Activated CD8-positive, alpha-beta T cell treated with anti-CD3 and anti-CD28 coated beads for 36 hours (primary cell): ENCODE measurements at regions of chr14 and their contacts with region 1.

Region 1: DNA sequence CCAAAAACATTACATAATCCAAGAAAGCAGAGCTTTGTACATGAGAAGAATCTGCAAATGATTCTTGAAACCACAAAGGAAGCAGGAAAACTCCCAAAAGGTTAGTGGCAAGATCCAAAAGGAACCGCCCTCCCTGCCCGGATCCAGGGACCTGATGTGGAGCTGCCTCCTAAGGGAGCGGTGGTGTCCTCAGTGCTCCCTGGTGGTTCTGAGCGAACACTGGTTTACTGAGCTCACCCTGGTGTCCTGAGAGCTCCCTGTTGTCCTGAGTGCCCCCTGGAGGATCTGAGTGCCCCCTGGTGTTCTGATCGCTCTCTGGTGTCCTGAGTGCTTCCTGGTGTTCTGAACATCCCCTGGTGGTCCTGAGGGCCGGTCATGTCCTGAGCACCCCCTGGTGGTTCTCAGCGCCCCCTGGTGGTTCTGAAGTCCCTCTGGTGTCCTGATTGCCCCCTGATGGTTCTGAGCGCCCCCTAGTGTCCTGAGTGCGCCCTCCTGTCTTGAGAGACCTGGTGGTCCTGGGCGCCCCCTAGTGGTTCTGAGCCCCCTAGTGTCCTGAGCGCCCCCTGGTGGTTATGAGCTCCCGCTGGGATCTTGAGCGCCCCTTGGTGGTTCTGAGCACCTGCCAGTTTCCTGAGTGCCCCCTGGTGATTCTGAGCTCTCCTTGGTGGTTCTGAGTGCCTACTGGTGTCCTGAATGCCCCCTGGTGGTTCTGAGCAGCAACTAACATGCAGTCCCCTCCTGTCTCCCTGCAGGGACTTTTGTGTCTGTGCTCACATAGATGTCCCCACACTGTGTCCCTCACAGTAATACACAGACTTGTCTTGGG is 891.1 kb downstream of the TMEM121 start:
- DNase-seq: peak; percentile 100
- ATAC-seq: peak; percentile 97
- H3K4me3 Mint-ChIP-seq: no peak overlapping the region
- H3K27ac Mint-ChIP-seq: no peak overlapping the region
- H3K4me1 Mint-ChIP-seq: no peaks in the 10 kb centered on the region
- H3K27me3 Mint-ChIP-seq: peaks cover 2% of the 10 kb centered on the region
- CTCF ChIP-seq: peak; percentile 100

Region 2: GRCh38 chr14:106372870-106373652 is 44.4 kb before region 1 on chr14:
- CTCF ChIA-PET with region 1: interaction called, 136 read pairs
- POLR2A ChIA-PET with region 1: interaction called, 5 read pairs
- intact Hi-C with region 1: no loop called
- DNase-seq: peak; percentile 93
- ATAC-seq: peak; percentile 96
- H3K4me3 Mint-ChIP-seq: peak overlapping the region; percentile 45
- H3K27ac Mint-ChIP-seq: peak overlapping the region; percentile 40
- H3K4me1 Mint-ChIP-seq: peaks cover 24% of the 10 kb centered on the region
- H3K27me3 Mint-ChIP-seq: no peaks in the 10 kb centered on the region
- CTCF ChIP-seq: peak; percentile 87

Region 3: GRCh38 chr14:106459971-106460730 is 42.7 kb after region 1 on chr14:
- CTCF ChIA-PET with region 1: interaction called, 183 read pairs
- POLR2A ChIA-PET with region 1: no interaction called
- intact Hi-C with region 1: no loop called
- DNase-seq: no peak
- ATAC-seq: no peak
- H3K4me3 Mint-ChIP-seq: no peak overlapping the region
- H3K27ac Mint-ChIP-seq: no peak overlapping the region
- H3K4me1 Mint-ChIP-seq: no peaks in the 10 kb centered on the region
- H3K27me3 Mint-ChIP-seq: no peaks in the 10 kb centered on the region
- CTCF ChIP-seq: no peak

Region 4: GRCh38 chr14:106511006-106511799 is 93.8 kb after region 1 on chr14:
- CTCF ChIA-PET with region 1: interaction called, 94 read pairs
- POLR2A ChIA-PET with region 1: no interaction called
- intact Hi-C with region 1: no loop called
- DNase-seq: peak; percentile 71
- ATAC-seq: peak; percentile 68
- H3K4me3 Mint-ChIP-seq: peak overlapping the region; percentile 18
- H3K27ac Mint-ChIP-seq: peak overlapping the region; percentile 62
- H3K4me1 Mint-ChIP-seq: peaks cover 68% of the 10 kb centered on the region
- H3K27me3 Mint-ChIP-seq: no peaks in the 10 kb centered on the region
- CTCF ChIP-seq: no peak

Region 5: GRCh38 chr14:106538201-106538600 is 120.8 kb after region 1 on chr14:
- CTCF ChIA-PET with region 1: interaction called, 270 read pairs
- POLR2A ChIA-PET with region 1: no interaction called
- intact Hi-C with region 1: no loop called
- DNase-seq: no peak
- ATAC-seq: no peak
- H3K4me3 Mint-ChIP-seq: no peak overlapping the region
- H3K27ac Mint-ChIP-seq: no peak overlapping the region
- H3K4me1 Mint-ChIP-seq: peaks cover 12% of the 10 kb centered on the region
- H3K27me3 Mint-ChIP-seq: peaks cover 23% of the 10 kb centered on the region
- CTCF ChIP-seq: no peak

Region 6: DNA sequence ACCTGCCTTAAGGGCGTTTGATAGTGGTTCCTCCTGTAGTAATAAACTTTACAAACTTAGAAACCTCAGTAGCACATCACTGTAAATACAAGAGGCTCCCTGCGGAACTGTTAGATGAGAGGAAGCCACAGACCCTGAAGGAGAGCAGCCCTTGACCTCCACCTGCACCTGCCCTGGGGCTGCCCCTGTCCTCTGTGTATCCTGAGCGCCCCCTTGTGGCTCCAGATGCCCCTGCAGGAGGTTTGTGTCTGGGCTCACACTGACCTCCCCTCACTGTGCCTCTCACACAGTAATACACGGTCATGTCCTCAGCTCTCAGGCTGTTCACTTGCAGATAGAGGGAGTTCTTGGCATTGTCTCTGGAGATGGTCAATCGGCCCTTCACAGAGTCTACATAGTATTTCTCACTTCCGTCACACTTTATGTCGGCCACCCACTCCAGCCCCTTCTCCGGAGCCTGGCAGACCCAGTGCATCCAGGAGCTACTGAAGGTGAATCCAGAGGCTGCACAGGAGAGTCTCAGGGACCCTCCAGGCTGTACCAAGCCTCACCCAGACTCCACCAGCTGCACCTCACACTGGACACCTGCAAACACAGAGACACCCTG is 168.8 kb after region 1 on chr14:
- CTCF ChIA-PET with region 1: interaction called, 10 read pairs
- POLR2A ChIA-PET with region 1: no interaction called
- intact Hi-C with region 1: no loop called
- DNase-seq: peak; percentile 85
- ATAC-seq: peak; percentile 100
- H3K4me3 Mint-ChIP-seq: no peak overlapping the region
- H3K27ac Mint-ChIP-seq: no peak overlapping the region
- H3K4me1 Mint-ChIP-seq: peaks cover 4% of the 10 kb centered on the region
- H3K27me3 Mint-ChIP-seq: no peaks in the 10 kb centered on the region
- CTCF ChIP-seq: peak; percentile 91

Region 7: GRCh38 chr14:106636107-106636506 is 218.7 kb after region 1 on chr14:
- CTCF ChIA-PET with region 1: no interaction called
- POLR2A ChIA-PET with region 1: no interaction called
- intact Hi-C with region 1: no loop called
- DNase-seq: no peak
- ATAC-seq: no peak
- H3K4me3 Mint-ChIP-seq: no peak overlapping the region
- H3K27ac Mint-ChIP-seq: no peak overlapping the region
- H3K4me1 Mint-ChIP-seq: peaks cover 4% of the 10 kb centered on the region
- H3K27me3 Mint-ChIP-seq: peaks cover 2% of the 10 kb centered on the region
- CTCF ChIP-seq: no peak

Region 8: DNA sequence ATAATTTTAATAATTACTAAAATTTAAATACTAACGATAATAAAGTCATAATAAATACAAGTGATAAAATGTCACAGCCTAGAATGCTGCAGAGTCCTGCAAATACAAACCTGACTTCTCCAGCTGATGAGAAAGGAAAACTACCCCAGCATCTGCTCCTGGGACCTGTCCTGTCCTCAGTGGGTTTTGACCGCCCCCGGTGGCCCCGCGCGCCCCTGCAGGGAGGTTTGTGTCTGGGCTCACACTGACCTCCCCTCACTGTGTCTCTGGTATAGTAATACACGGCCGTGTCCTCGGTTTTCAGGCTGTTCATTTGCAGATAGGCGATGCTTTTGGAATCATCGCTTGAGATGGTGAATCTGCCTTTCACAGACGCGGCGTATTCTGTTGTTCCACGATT is 248.4 kb after region 1 on chr14:
- CTCF ChIA-PET with region 1: interaction called, 26 read pairs
- POLR2A ChIA-PET with region 1: no interaction called
- intact Hi-C with region 1: no loop called
- DNase-seq: peak; percentile 10
- ATAC-seq: no peak
- H3K4me3 Mint-ChIP-seq: no peak overlapping the region
- H3K27ac Mint-ChIP-seq: no peak overlapping the region
- H3K4me1 Mint-ChIP-seq: peaks cover 19% of the 10 kb centered on the region
- H3K27me3 Mint-ChIP-seq: peaks cover 5% of the 10 kb centered on the region
- CTCF ChIP-seq: no peak

Region 9: DNA sequence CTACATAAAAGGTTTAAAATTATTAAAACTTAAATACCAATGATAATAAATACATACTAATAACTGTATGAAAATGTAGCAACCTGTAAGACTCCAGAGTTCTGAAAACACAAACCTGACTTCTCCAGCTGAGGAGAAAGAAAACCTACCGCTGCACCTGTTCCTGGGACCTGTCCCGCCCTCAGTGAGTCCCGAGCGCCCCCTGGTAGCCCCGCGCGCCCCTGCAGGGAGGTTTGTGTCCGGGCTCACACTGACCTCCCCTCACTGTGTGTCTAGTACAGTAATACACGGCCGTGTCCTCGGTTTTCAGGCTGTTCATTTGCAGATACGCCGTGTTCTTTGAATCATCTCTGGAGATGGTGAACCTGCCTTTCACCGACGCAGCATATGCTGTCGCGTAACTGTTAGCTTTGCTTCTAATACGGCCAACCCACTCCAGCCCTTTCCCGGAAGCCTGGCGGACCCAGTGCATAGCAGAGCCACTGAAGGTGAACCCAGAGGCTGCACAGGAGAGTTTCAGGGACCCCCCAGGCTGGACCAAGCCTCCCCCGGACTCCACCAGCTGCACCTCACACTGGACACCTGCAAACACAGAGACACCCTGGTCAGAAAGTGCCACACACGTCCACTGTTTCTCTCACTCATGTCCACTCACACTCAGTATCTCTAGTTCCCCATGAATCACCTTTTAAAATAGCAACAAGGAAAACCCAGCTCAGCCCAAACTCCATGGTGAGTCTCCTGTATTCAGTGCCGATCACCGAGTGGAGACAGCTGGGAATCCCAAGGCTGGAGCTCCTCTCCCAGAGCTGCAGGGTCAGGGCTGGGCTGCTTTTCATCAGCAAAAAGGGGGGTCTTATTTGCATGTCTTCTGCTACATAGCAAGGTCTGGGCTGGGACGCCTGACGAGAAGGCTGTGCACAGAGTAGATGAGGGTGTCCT is 385.3 kb after region 1 on chr14:
- CTCF ChIA-PET with region 1: no interaction called
- POLR2A ChIA-PET with region 1: no interaction called
- intact Hi-C with region 1: no loop called
- DNase-seq: peak; percentile 43
- ATAC-seq: no peak
- H3K4me3 Mint-ChIP-seq: no peak overlapping the region
- H3K27ac Mint-ChIP-seq: no peak overlapping the region
- H3K4me1 Mint-ChIP-seq: no peaks in the 10 kb centered on the region
- H3K27me3 Mint-ChIP-seq: peaks cover 46% of the 10 kb centered on the region
- CTCF ChIP-seq: peak; percentile 44